ENCODE measurements at regions of chr17 and their contacts with region 1.

Region 1: DNA sequence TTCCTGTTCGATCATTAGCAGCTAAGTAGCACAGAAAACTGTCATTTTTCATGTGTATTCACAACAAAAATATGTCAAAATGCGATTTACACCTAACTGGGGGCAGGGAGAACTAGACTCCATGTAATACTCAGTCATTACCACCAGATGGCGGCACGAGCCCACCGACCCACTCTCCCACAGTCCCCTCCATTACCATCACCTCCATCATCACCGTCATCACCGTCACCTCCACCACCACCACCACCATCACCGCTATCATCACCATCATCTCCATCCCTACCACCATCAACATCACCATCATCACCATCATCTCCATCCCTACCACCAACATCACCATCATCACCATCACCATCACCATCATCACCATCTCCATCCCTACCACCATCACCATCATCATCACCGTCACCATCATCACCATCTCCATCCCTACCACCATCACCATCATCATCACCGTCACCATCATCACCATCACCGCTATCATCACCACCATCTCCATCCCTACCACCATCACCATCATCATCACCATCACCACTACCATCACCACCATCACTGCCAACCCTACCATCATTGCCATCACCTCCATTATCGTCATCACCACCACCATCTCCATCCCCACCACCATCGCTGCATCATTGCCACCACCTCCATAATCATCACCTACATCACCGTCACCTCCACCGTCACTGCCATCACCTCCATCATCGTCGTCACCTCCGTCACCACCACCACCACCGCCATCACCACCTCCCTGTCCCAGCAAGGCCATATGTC is 14.4 kb downstream of the NDUFAF8 start:
- H3K4me3 Mint-ChIP-seq: no peak overlapping the region
- H3K27ac Mint-ChIP-seq: no peak overlapping the region
- H3K4me1 Mint-ChIP-seq: peaks cover 33% of the 10 kb centered on the region
- H3K27me3 Mint-ChIP-seq: no peaks in the 10 kb centered on the region

Region 2: DNA sequence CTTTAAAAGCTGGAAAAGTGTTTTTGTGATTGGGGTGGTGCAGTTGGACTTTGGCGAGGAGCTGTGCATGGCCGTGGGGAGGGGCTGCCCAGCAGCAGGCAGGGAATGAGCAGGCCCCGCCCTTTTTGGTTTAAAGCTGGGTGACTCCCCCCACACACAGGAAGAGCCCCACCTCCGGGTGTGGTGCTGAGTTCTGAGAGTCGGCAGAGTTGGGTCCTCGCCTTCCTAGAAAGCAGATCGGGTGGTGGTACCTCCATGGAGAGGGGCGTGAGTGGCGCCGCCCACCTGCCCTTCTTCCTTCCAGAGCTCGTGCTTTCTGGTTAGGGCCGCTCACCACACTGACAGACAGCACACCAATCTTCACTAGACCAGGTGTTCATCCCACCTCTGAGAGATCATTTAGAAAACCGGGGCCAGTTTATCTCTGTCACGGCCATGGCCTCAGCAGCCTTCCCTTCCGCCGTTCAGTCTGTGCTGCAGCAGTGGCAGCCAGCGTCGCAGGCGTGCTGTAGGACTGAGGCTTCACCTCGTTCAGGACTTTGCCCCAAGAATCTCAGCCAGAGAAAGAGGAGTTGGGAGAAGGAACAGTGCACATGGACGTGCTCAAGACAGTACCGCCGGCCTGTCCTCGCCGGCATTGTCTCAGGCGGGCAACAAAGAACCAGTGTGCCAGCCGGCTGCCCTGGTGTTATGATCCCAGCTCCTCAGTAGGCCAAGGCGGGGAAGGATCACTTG is 405.9 kb before region 1 on chr17:
- intact Hi-C with region 1: no loop called
- H3K4me3 Mint-ChIP-seq: no peak overlapping the region
- H3K27ac Mint-ChIP-seq: no peak overlapping the region
- H3K4me1 Mint-ChIP-seq: peaks cover 13% of the 10 kb centered on the region
- H3K27me3 Mint-ChIP-seq: no peaks in the 10 kb centered on the region

Region 3: GRCh38 chr17:81189670-81190530 is 63.6 kb before region 1 on chr17:
- intact Hi-C with region 1: no loop called
- H3K4me3 Mint-ChIP-seq: no peak overlapping the region
- H3K27ac Mint-ChIP-seq: no peak overlapping the region
- H3K4me1 Mint-ChIP-seq: peaks cover 5% of the 10 kb centered on the region
- H3K27me3 Mint-ChIP-seq: peaks cover 8% of the 10 kb centered on the region

Region 4: GRCh38 chr17:81294856-81295680 is 41.5 kb after region 1 on chr17 and contains the start of gene SLC38A10:
- intact Hi-C with region 1: loop called (anchors 5 kb)
- H3K4me3 Mint-ChIP-seq: peak within 1 kb of the TSS; percentile 92
- H3K27ac Mint-ChIP-seq: peak within 1 kb of the TSS; percentile 96
- H3K4me1 Mint-ChIP-seq: peaks cover 50% of the 10 kb centered on the region
- H3K27me3 Mint-ChIP-seq: peaks cover 3% of the 10 kb centered on the region

Region 5: DNA sequence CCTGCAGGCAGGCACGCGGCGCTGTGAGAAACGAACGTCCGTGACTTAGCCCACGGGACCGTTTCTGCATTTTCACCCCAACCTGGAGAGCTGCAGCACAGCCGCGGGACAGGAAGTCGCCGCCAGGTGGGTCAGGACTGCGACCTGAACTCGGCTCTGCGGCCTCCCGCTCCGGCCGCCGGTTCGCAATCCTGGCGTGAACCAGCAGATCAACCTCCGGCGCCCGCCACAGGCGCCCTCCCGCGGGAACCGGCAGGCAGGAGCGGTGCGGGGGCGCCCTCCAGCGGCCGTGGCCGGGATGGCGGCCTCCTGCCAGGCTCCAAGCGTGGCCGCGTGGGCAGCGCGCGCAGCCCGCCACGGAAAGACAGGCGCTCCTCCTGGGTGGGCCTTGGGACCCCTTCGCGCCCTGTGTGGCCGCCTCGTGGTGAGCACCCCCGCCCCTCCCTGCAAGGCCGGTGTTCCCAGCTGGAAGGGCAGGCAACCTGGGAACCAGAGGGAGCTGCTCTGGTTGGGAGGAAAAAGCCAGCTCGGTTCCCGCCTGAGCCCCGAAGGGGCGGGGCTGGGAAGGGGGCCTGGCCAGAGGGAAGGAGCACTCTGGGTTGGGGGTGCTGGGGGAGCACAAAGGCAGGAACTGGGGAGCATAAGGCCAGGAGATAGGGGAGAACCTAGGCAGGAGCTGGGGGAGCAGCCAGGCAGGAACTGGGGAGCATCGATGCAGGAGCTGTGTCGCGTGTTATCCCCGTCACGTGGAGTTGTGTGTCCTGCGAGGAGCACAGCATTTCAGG is 230.8 kb after region 1 on chr17:
- intact Hi-C with region 1: loop called (anchors 1 kb)
- H3K4me3 Mint-ChIP-seq: peak overlapping the region; percentile 51
- H3K27ac Mint-ChIP-seq: no peak overlapping the region
- H3K4me1 Mint-ChIP-seq: peaks cover 35% of the 10 kb centered on the region
- H3K27me3 Mint-ChIP-seq: peaks cover 55% of the 10 kb centered on the region

Region 6: DNA sequence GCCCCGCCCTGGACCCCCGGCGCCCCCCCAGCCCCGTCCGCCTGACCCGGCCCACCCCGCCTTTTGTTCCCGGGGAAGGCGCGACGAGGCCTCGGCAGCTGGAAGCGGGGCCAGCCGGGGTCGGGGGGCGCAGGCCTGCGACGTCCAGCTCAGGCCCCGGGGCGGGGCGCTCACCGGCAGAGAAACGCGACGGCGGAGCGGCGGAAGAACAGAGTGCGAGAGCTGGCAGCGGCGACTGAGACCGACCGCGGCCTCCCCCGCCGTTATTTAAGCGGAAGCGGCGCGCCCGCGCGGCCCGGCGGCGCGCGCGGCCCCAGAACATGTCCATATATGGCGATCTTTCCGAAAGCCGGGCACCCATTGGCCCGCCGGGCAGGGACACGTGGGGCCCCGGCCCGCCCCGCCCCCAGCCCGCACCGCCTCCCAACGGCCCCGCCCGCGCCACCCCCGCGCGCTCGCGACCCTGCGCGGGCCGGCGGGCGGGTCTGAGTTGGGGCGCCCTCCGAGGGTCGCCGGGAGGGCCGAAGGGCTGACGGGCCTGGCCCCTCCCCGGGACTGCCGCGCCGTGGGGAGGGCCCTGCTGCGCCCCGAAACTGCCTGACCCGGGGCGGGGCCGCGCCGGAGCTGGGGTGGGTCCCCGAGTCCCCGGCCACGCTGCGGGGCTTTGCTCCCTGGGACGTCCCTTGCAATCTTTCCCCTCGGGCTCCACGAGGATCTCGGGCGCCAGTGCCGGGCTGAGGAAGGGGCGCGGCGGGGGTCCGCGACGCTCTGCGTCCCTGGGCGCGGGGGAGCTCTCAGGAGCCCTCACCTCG is 259.2 kb after region 1 on chr17 and contains the start of gene ACTG1:
- intact Hi-C with region 1: no loop called
- H3K4me3 Mint-ChIP-seq: peak within 1 kb of the TSS; percentile 99
- H3K27ac Mint-ChIP-seq: peak within 1 kb of the TSS; percentile 88
- H3K4me1 Mint-ChIP-seq: peaks cover 69% of the 10 kb centered on the region
- H3K27me3 Mint-ChIP-seq: no peaks in the 10 kb centered on the region

Region 7: GRCh38 chr17:81601525-81602120 is 348.1 kb after region 1 on chr17:
- intact Hi-C with region 1: loop called (anchors 2 kb)
- H3K4me3 Mint-ChIP-seq: no peak overlapping the region
- H3K27ac Mint-ChIP-seq: no peak overlapping the region
- H3K4me1 Mint-ChIP-seq: peaks cover 41% of the 10 kb centered on the region
- H3K27me3 Mint-ChIP-seq: no peaks in the 10 kb centered on the region